PC-9 (cell line): ENCODE measurements at regions of chr10 and their contacts with region 1.

Region 1: DNA sequence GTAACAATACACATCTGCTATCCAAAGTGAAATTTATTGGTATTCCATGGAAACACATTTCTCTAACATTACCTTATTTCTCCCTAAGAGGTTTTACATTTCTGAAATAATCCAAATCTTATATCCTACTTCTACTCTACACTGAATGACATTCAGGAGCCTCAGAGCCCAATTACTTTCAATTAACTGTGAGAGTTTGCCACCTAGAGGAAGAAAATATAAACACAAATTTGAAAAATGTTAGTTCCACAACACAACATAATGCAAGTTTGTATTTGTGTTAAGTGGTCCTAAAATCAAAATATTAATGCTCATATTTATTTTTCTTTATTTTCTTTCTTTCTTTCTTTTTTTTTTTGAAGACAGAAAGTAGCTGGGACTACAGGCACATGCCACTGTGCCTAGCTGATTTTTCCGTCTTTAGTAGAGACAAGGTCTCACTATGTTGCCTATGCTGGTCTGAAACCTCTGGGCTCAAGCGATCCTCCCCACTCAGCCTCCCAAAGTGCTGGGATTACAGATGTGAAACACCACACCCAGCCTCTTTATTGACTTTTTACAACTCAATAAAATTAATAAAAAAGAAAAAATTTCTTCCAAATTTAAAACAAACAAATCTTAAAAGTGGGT is 46.0 kb downstream of the ATAD1 start:
- DNase-seq: no peak
- H3K4me3 ChIP-seq: no peak overlapping the region
- H3K27ac ChIP-seq: no peak overlapping the region
- H3K4me1 ChIP-seq: no peaks in the 10 kb centered on the region
- H3K27me3 ChIP-seq: no peaks in the 10 kb centered on the region
- CTCF ChIP-seq: peak; percentile 62

Region 2: DNA sequence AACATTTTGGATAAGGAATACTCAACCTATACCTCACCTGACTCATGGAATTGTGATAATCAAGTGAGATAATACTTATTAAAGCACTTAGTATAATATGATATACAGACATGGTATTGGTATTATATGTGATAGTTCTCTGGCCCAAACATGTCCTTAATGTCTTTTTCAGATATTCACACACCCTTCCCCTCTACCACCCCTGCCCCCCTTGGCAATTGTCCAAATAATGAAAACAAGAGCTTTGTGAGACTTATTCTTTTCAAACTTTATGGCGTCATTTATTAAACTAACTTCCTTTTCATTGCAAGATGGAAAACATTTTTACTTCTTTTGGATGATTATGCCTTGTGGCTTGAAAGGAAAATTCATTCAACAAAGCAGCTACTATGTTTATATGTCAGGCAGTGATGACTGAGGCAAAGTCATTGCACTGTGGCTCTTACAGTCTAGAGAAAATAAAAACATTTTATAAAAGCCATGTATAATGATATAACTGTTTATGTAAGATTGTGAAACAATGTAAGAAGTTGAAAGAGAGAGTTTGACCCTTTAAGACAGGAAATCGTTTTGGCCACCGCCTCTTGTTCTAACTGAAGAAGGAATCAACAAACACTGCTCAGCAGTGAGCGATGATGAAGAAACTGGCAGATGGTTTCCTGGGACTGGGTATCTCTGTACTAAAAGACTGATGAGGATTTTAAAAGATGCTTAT is 239.9 kb before region 1 on chr10:
- CTCF ChIA-PET with region 1: no interaction called
- POLR2A ChIA-PET with region 1: no interaction called
- intact Hi-C with region 1: loop called (anchors 2 kb)
- DNase-seq: no peak
- H3K4me3 ChIP-seq: no peak overlapping the region
- H3K27ac ChIP-seq: no peak overlapping the region
- H3K4me1 ChIP-seq: no peaks in the 10 kb centered on the region
- H3K27me3 ChIP-seq: no peaks in the 10 kb centered on the region
- CTCF ChIP-seq: no peak

Region 3: GRCh38 chr10:88769384-88769783 is 997.4 kb after region 1 on chr10:
- CTCF ChIA-PET with region 1: no interaction called
- POLR2A ChIA-PET with region 1: interaction called, 10 read pairs
- intact Hi-C with region 1: no loop called
- DNase-seq: no peak
- H3K4me3 ChIP-seq: no peak overlapping the region
- H3K27ac ChIP-seq: no peak overlapping the region
- H3K4me1 ChIP-seq: no peaks in the 10 kb centered on the region
- H3K27me3 ChIP-seq: no peaks in the 10 kb centered on the region
- CTCF ChIP-seq: no peak